Heart left ventricle (tissue), 16 donors: ENCODE measurements at regions of chr15 and their contacts with region 1.

Region 1: DNA sequence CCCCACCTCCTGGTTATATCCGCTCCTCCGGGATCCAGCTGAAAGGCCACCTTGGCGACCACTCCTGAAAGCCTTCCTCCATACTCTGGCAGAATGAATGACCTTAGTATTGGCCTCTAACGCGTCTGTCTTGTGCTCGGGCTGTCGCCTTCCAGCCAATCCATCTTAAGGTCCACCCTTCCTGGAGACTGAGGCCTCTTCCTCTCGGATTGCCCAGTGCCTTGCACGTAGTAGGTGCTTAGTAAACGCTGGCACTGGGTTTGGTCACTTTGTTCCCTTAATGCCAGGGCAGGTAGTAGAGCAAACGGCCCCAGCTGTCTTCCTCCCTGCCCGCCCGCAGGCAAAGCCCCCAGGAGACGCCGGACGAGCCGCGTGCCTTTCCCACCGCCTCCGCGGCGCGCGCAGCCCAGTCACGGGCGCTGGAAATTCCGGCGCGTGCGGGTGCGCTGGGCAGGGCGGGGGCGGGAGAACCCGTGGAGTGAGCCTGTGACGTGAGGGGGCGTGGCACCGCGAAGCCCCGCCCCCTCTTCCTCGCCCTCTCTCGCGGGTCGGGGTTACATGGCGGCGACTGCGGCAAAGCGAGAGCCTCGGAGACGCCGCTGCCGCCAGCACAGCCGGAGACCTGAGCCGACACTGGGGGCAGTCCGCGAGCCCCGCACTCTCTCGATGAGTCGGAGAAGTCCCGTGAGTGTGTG is at the start of gene MAPK6:
- DNase-seq: peak; percentile 93 to 97 (median 95)
- ATAC-seq: peak; percentile 90 to 96 (median 95)
- H3K4me3 ChIP-seq: peak within 1 kb of the TSS; percentile 60 to 89 (median 69)
- H3K27ac ChIP-seq: peak within 1 kb of the TSS; percentile 91 to 96 (median 93)
- H3K4me1 ChIP-seq: peaks cover 5 to 49% (median 33%) of the 10 kb centered on the region in 12 donors
- H3K27me3 ChIP-seq: no peaks in the 10 kb centered on the region
- CTCF ChIP-seq: no peak
- POLR2A ChIP-seq: peak; percentile 32 to 83
- total RNA-seq, gene MAPK6: 10.4 to 26.2 (median 18.2) TPM

Region 2: GRCh38 chr15:51971375-51972133 is 47.3 kb before region 1 on chr15 and contains the start of gene LEO1:
- intact Hi-C with region 1: loop called in 2 of 10 experiments (anchors 2 to 5 kb)
- DNase-seq: peak; percentile 89 to 95 (median 93)
- ATAC-seq: peak; percentile 90 to 98 (median 98)
- H3K4me3 ChIP-seq: peak within 1 kb of the TSS; percentile 71 to 96 (median 90)
- H3K27ac ChIP-seq: peak within 1 kb of the TSS; percentile 83 to 97 (median 92)
- H3K4me1 ChIP-seq: peaks cover 0 to 24% (median 12%) of the 10 kb centered on the region in 12 donors
- H3K27me3 ChIP-seq: no peaks in the 10 kb centered on the region
- CTCF ChIP-seq: peak in 9 of 12 donors; percentile 7 to 71 (median 37)
- POLR2A ChIP-seq: peak in 1 of 2 donors; percentile 40
- total RNA-seq, gene LEO1: 4.9 to 10.4 (median 8.3) TPM

Region 3: DNA sequence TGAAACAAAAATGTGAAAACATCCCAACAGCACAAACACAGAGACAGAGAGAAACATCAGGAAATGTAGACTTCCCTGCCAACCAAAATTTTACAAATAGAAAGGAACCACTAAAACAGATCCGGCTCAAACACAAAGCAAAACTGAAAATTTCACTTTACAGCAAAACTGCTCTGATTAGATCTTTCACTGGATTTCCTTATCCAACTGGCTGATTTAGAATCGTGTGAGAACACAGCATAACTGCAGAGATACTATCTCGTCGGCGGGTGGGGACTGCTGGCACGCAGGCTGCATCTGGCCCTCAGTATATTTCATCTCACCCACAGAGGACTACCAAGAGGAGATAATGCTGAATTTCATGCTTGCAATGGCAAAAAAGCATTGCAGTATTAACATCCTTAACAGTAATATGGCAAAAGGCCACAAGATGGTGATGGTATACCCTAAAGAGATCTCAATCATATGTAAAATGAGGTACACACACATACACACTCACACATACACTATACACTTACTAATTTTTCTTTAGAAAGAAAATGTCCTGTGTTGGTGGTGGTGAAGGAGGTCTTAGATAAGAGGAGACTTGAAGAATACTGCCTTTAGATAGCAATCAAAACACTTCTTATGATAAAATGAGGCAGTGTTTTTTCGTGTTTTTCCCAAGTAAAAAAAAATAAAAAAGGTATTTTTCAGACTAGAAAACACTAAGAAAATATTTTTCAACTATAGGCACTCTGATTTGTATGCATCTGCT is 36.6 kb before region 1 on chr15:
- intact Hi-C with region 1: loop called in 4 of 10 experiments (anchors 2 to 5 kb)
- DNase-seq: peak in 2 of 5 donors; percentile 22 to 44
- ATAC-seq: peak; percentile 53 to 80 (median 77)
- H3K4me3 ChIP-seq: peak overlapping the region in 9 of 12 donors; percentile 9 to 50 (median 34)
- H3K27ac ChIP-seq: peak overlapping the region; percentile 33 to 79 (median 66)
- H3K4me1 ChIP-seq: peaks cover 0 to 24% (median 17%) of the 10 kb centered on the region in 12 donors
- H3K27me3 ChIP-seq: no peaks in the 10 kb centered on the region
- CTCF ChIP-seq: peak; percentile 24 to 63 (median 53)
- POLR2A ChIP-seq: no peak